Activated naive CD4-positive, alpha-beta T cell treated with anti-CD3 and anti-CD28 coated beads for 36 hours (primary cell): ENCODE measurements at regions of chr7 and their contacts with region 1.

Region 1: DNA sequence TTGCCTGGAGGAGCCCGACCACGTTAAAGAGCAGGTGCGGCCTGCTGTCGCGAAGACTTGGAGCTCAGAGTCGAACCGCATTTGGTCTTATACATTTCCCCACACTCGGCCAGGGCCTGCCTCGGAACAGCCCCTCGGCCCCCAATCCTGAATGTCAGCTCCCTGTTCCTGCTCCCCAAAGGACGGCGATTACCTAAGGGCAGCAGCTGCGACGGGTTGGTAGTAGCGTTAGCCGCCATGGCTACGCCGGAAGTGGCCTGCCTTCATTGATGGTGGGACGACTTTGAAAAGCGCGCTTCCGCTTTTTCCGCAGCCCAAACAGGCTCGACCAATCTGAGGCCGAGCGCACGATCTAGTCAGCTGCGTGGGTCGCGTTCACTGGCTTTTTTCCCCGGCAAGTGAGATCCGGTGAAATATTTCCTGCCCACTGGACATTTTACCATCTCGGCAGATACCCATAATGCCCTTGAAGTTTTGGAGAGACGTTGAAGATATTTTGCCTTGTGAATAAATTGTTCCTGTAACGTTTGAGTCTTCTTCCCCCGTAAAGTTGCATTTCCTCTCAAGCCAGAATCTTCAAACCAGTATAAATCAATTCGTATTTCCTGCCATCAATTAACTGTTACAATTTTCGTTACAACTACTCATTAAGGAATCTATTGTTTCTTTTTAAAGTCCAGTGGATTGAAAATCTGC is at the start of gene LSM5:
- DNase-seq: peak; percentile 94
- H3K4me3 Mint-ChIP-seq: peak within 1 kb of the TSS; percentile 86
- H3K27ac Mint-ChIP-seq: peak within 1 kb of the TSS; percentile 95
- H3K4me1 Mint-ChIP-seq: peaks cover 27% of the 10 kb centered on the region
- H3K27me3 Mint-ChIP-seq: no peaks in the 10 kb centered on the region
- total RNA-seq, gene LSM5: 132 to 141 TPM

Region 2: DNA sequence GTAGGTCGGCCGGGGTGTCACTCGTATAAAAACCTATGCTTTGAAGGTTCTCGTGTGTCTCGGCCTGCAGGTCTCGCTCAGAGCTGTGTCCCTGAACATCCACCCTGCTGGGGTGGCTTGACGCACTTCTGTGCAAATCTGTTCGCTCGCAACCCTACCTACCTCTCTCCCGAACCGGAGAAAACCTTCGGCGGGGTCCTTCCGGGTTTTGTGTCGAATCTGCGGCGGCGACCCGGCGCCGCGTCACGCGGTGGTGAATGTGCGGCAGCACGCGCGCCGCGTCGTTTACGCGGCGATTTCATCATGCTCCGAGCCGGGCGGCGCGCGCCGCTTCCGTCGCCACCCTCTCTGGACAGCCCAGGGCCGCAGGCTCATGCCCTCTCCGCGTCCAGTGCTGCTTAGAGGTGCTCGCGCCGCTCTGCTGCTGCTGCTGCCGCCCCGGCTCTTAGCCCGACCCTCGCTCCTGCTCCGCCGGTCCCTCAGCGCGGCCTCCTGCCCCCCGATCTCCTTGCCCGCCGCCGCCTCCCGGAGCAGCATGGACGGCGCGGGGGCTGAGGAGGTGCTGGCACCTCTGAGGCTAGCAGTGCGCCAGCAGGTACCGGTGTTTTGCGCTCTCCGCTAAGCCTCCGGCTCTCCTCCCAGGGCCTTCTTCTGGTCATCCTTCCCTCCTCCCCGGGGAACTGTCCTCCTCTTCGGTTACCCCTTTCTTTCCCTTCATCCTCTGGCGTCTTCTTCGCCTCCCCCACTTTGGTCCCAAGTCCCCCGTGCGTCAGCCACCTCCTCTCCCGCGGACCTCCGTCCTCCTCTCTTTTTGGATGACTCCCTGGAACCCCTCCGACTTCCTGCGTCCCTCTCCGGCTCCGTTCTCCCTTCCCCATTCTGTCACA is 1895.5 kb before region 1 on chr7 and contains the start of gene GARS1:
- CTCF ChIA-PET with region 1: no interaction called
- intact Hi-C with region 1: loop called (anchors 5 kb)
- DNase-seq: peak; percentile 88
- H3K4me3 Mint-ChIP-seq: peak within 1 kb of the TSS; percentile 96
- H3K27ac Mint-ChIP-seq: peak within 1 kb of the TSS; percentile 97
- H3K4me1 Mint-ChIP-seq: peaks cover 49% of the 10 kb centered on the region
- H3K27me3 Mint-ChIP-seq: no peaks in the 10 kb centered on the region
- total RNA-seq, gene GARS1: 367 to 385 TPM

Region 3: GRCh38 chr7:32588657-32589056 is 98.4 kb after region 1 on chr7:
- CTCF ChIA-PET with region 1: no interaction called
- intact Hi-C with region 1: loop called (anchors 1 kb)
- DNase-seq: peak; percentile 40
- H3K4me3 Mint-ChIP-seq: no peak overlapping the region
- H3K27ac Mint-ChIP-seq: peak overlapping the region; percentile 26
- H3K4me1 Mint-ChIP-seq: peaks cover 19% of the 10 kb centered on the region
- H3K27me3 Mint-ChIP-seq: no peaks in the 10 kb centered on the region

Region 4: GRCh38 chr7:32761451-32762205 is 271.4 kb after region 1 on chr7:
- CTCF ChIA-PET with region 1: no interaction called
- intact Hi-C with region 1: loop called (anchors 2 kb)
- DNase-seq: no peak
- H3K4me3 Mint-ChIP-seq: no peak overlapping the region
- H3K27ac Mint-ChIP-seq: no peak overlapping the region
- H3K4me1 Mint-ChIP-seq: peaks cover 9% of the 10 kb centered on the region
- H3K27me3 Mint-ChIP-seq: peaks cover 40% of the 10 kb centered on the region

Region 5: DNA sequence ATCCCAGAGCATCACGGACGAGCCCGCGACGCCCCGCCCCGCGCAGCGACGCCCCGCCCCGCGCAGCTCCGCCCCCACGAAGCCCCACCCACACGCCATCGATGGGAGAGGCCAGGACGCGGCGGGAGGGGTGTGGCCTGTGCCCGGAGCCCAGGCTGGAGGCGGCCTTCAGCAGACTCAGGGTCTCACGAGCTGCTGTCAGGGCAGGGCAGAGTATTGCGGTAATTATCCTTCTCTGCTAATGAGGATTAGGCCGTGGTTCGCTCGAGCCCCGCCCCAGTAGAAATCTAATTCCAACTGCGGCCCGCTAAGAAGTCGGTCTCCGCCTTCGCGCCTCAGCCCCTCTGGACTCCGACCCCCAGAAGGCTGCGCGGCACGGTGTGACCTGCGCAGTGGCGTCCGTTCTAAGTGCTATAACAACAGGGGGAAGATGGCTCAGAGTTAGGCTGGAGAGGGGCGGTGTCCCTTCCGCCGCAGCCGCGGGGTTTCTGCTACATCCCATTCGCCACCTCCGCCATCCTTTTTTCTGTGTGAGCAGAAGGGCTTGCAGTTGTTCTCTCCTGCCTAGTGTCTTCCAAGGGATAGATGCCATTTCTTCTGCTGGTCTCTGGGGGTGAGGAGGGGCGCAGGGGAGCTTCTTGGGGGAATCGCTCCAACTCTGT is 572.6 kb after region 1 on chr7:
- CTCF ChIA-PET with region 1: no interaction called
- intact Hi-C with region 1: loop called (anchors 1 kb)
- DNase-seq: peak; percentile 93
- H3K4me3 Mint-ChIP-seq: peak overlapping the region; percentile 92
- H3K27ac Mint-ChIP-seq: peak overlapping the region; percentile 88
- H3K4me1 Mint-ChIP-seq: peaks cover 30% of the 10 kb centered on the region
- H3K27me3 Mint-ChIP-seq: no peaks in the 10 kb centered on the region